Mammary epithelial cell (primary cell): ENCODE measurements at regions of chr19 and their contacts with region 1.

Region 1: DNA sequence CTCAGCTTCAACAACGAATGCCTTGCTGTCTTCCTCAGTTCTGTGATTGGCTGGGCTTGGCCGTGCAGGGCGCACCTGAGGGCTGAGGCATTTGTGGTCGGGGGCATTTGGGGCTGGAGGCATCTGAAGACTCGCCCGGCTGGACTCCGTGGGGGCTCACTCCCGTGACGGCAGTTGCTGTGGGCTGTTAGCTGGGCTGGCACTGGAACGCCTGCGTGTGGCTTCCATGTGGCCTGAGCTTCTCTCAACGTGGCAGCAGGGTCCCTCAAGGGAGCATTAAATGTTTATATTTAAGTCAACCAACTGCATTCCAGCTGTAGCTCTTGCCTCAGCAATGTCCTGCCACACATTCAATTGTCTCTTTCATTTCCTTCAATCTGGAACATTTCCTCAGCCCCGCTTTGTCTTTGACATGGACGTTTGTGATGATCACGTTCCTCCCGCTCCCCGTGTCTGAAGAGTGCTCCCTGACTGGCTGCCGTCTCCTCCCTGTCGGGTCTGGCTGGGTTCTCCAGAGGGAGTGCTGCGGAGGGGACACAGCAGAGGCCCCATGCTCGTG is 21.0 kb downstream of the CCDC8 start:
- DNase-seq: no peak
- H3K4me3 ChIP-seq: no peak overlapping the region
- H3K27ac ChIP-seq: no peak overlapping the region
- H3K4me1 ChIP-seq: no peaks in the 10 kb centered on the region
- H3K27me3 ChIP-seq: no peaks in the 10 kb centered on the region
- CTCF ChIP-seq: no peak

Region 2: GRCh38 chr19:46283771-46284170 is 108.6 kb before region 1 on chr19:
- CTCF ChIA-PET with region 1: no interaction called
- dilution Hi-C with region 1: no loop called
- in situ Hi-C with region 1: no loop called
- intact Hi-C with region 1: loop called (anchors 1 kb)
- DNase-seq: no peak
- H3K4me3 ChIP-seq: no peak overlapping the region
- H3K27ac ChIP-seq: no peak overlapping the region
- H3K4me1 ChIP-seq: peaks cover under 1% of the 10 kb centered on the region
- H3K27me3 ChIP-seq: no peaks in the 10 kb centered on the region
- CTCF ChIP-seq: no peak